HEK293T (cell line): ENCODE measurements at regions of chr15 and their contacts with region 1.

Region 1: GRCh38 chr15:50182219-50183013 is 420 bp downstream of the SLC27A2 start:
- DNase-seq: peak; percentile 41

Region 2: GRCh38 chr15:50315814-50316630 is 133.6 kb after region 1 on chr15:
- CTCF ChIA-PET with region 1: interaction called, 10 read pairs
- POLR2A ChIA-PET with region 1: interaction called, 4 read pairs
- DNase-seq: peak; percentile 7